ENCODE measurements at regions of chr11 and their contacts with region 1.

Region 1: GRCh38 chr11:62025487-62026105 is 58.2 kb upstream of the FTH1 start:
- DNase-seq: peak; percentile 48 to 96 (median 87)
- ATAC-seq: peak; percentile 87 to 94 (median 92)
- H3K4me3 ChIP-seq: peak overlapping the region; percentile 14 to 47
- H3K4me3 Mint-ChIP-seq: peak overlapping the region; percentile 66 to 72 (median 70)
- H3K27ac ChIP-seq: peak overlapping the region; percentile 98
- H3K27ac Mint-ChIP-seq: peak overlapping the region; percentile 95 to 99
- H3K4me1 ChIP-seq: peaks cover 10 to 21% of the 10 kb centered on the region in 2 experiments
- H3K4me1 Mint-ChIP-seq: peaks cover 16 to 32% (median 22%) of the 10 kb centered on the region in 3 donors
- H3K27me3 ChIP-seq: no peaks in the 10 kb centered on the region
- H3K27me3 Mint-ChIP-seq: no peaks in the 10 kb centered on the region

Region 2: DNA sequence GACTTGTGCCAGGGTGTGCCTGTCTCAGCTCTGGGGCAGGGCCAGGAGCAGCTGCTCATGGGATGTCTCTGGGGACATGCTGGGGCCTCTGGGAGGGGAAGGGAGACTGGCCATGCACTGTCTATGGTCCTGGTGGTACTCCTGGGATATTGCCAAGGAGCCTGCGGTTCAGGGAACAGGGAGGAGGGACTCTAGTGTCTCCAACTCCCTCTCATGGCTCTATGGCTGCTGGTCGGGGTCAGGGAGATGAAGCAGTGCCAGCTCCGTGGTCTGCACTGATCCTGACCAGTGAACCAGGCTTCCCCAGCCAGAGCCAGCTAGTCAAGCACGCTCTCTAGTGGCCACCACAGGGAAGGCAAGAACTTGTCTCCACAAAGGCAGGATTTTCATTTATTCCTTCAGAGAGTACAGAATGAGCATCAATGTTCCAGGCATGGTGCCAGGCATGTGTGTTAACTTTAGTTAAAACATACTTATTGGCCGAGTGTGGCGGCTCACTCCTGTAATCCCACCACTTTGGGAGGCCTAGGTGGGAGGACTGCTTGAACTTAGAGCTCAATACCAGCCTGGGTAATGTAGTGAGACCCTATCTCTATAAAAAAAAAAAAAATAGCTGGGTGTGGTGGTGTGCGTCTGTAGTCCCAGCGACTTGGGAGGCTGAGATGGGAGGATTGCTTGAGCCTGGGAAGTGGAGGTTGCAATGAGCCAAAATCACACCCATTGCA is 77.9 kb before region 1 on chr11:
- CTCF ChIA-PET with region 1: interaction called in 1 of 2 experiments, 16 read pairs
- POLR2A ChIA-PET with region 1: no interaction called
- DNase-seq: peak in 32 of 35 experiments; percentile 25 to 78 (median 58)
- ATAC-seq: peak; percentile 45 to 76 (median 67)
- H3K4me3 ChIP-seq: no peak overlapping the region
- H3K4me3 Mint-ChIP-seq: no peak overlapping the region
- H3K27ac ChIP-seq: no peak overlapping the region
- H3K27ac Mint-ChIP-seq: no peak overlapping the region
- H3K4me1 ChIP-seq: peaks cover 0 to 6% of the 10 kb centered on the region in 2 experiments
- H3K4me1 Mint-ChIP-seq: no peaks in the 10 kb centered on the region
- H3K27me3 ChIP-seq: peaks cover 0 to 41% of the 10 kb centered on the region in 2 experiments
- H3K27me3 Mint-ChIP-seq: peaks cover 0 to 4% of the 10 kb centered on the region in 2 donors

Region 3: DNA sequence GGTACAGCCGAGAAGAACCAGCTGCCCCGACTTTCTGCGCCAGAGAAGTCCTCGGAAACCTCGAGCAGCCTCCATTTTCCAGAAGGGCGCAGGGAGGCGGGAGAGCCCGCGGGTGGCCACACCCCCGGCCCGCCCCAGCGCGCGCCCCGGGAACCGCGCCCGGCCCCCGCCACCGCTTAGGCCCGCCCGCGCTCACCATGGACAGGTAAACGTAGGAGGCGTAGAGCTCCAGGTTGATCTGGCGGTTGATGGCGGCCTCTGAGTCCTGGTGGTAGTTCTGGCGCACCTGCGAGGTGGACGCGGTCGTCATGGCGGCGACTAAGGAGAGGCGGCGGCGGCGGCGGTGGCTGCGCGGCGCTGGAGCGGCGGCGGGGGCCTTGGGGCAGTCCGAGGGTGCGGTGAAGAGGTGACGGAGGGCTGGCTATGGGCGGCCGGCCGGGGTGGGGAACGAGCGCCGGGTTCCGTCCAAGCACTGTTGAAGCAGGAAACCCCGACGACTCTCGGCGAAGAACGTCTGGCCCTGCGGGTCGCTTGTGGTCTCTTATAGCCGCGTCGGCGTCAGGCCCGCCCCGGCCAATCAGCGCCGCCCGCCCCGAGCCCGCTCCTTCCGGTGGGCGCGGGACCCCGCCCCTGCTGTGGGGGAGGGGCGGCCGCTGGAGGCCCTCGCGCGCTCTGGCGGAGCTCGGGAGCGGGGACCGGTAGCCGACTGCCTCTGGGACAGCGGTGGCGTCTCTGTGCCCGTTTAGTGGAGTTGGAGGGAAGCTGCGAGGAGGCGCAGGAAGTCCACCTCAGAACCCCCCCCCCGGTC is 58.3 kb before region 1 on chr11 and contains the start of gene FTH1:
- CTCF ChIA-PET with region 1: interaction called in 1 of 2 experiments, 8 read pairs
- POLR2A ChIA-PET with region 1: interaction called, 13 to 84 read pairs
- DNase-seq: peak; percentile 82 to 95 (median 89)
- ATAC-seq: peak; percentile 81 to 92 (median 88)
- H3K4me3 ChIP-seq: peak within 1 kb of the TSS; percentile 85 to 100
- H3K4me3 Mint-ChIP-seq: peak within 1 kb of the TSS; percentile 93 to 94 (median 94)
- H3K27ac ChIP-seq: peak within 1 kb of the TSS; percentile 91
- H3K27ac Mint-ChIP-seq: peak within 1 kb of the TSS; percentile 95 to 97
- H3K4me1 ChIP-seq: peaks cover 31 to 52% of the 10 kb centered on the region in 2 experiments
- H3K4me1 Mint-ChIP-seq: peaks cover 64 to 72% (median 67%) of the 10 kb centered on the region in 3 donors
- H3K27me3 ChIP-seq: no peaks in the 10 kb centered on the region
- H3K27me3 Mint-ChIP-seq: no peaks in the 10 kb centered on the region
- total RNA-seq, gene FTH1: 575 to 1,574 (median 654) TPM